ENCODE measurements at regions of chr20 and their contacts with region 1.

Region 1: GRCh38 chr20:25065625-25066338 is 7.8 kb upstream of the ACSS1 start:
- DNase-seq: peak; percentile 84
- ATAC-seq: peak; percentile 87
- H3K4me3 ChIP-seq: no peak overlapping the region
- H3K27ac ChIP-seq: no peak overlapping the region
- H3K4me1 ChIP-seq: peaks cover 3% of the 10 kb centered on the region; the same call in 1 of the 2 replicates
- H3K27me3 ChIP-seq: peaks cover 49% of the 10 kb centered on the region
- CTCF ChIP-seq: peak; percentile 95

Region 2: GRCh38 chr20:23283096-23283850 is 1782.5 kb before region 1 on chr20:
- CTCF ChIA-PET with region 1: no interaction called
- POLR2A ChIA-PET with region 1: no interaction called
- intact Hi-C with region 1: no loop called
- DNase-seq: no peak
- ATAC-seq: no peak
- H3K4me3 ChIP-seq: no peak overlapping the region
- H3K27ac ChIP-seq: no peak overlapping the region
- H3K4me1 ChIP-seq: no peaks in the 10 kb centered on the region
- H3K27me3 ChIP-seq: peaks cover 40% of the 10 kb centered on the region
- CTCF ChIP-seq: no peak

Region 3: DNA sequence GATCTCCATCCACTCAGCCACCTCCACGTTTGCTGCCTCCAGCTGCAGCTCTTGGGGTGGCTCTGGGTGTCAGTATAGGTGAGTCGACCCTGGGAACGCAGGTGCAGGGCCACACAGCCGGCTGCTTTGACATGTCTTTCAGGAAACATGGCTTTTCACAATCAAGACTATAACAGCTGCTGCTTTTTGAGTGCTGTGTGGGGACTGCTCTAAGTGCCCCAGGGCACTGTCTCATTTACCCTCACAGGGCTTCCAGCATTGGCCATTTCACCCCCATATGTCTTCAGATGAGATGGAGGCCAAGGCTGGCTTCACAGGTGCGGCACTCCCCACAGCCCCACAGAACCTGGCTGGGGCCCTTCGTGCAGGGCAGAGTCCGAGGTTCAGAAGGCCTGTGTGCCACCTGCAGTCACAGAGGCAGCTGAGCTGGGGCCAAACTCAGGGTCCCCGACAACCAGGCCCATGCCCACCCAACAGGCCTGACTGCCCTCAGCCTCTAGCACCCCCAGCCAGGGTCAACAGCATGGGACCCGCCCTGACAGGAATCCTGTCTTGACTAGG is 131.6 kb before region 1 on chr20:
- CTCF ChIA-PET with region 1: no interaction called
- POLR2A ChIA-PET with region 1: no interaction called
- intact Hi-C with region 1: loop called (anchors 5 kb)
- DNase-seq: no peak
- ATAC-seq: no peak
- H3K4me3 ChIP-seq: no peak overlapping the region
- H3K27ac ChIP-seq: no peak overlapping the region
- H3K4me1 ChIP-seq: peaks cover 39% of the 10 kb centered on the region
- H3K27me3 ChIP-seq: no peaks in the 10 kb centered on the region
- CTCF ChIP-seq: no peak

Region 4: DNA sequence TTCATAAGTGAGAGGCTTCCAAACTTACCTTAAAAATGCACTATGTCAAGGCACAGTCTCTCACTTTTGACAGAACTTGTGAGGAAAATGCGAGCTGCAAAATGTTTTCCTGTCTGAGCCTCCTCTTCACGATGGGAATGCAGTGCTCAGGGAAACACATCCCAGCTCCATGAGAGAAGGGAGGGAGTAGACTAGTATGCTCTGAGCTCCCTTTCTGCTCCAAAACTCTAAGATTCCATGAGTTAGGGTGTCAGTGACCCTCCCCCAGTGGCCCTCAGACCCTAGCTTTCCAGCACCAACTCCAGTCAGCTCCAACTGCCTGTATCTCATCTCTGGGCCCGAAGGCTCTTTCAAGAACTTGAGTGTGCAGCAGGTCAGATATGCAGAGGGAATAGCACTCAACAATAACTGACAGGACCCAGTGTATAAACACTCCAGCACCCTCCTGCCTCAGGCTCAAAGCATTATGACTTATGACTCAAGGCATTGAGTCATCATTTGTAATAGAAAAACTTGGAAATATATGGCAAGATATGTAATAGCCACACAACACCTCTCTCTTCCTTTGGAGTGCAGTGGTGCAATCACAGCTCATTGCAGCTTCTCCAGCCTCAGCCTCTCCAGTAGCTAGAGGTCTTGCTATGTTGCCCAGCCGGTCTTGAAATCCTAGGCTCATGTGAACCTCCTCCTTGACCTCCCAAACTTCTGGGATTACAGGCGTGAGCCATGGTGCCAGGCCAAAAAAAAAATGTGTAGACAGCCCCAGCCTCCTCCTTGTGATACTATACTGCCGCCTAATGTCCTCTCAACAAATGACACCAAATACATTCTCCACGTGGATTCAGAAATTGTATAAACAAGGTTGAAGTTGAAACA is 113.0 kb after region 1 on chr20:
- CTCF ChIA-PET with region 1: interaction called, 4 read pairs
- POLR2A ChIA-PET with region 1: no interaction called
- intact Hi-C with region 1: loop called (anchors 1 kb)
- DNase-seq: peak; percentile 99
- ATAC-seq: peak; percentile 94
- H3K4me3 ChIP-seq: peak overlapping the region; percentile 21; the same call in 1 of the 2 replicates
- H3K27ac ChIP-seq: peak overlapping the region; percentile 52
- H3K4me1 ChIP-seq: peaks cover 34% of the 10 kb centered on the region
- H3K27me3 ChIP-seq: no peaks in the 10 kb centered on the region
- CTCF ChIP-seq: peak; percentile 99